Colonic mucosa (tissue), 4 donors: ENCODE measurements at regions of chr17 and their contacts with region 1.

Region 1: GRCh38 chr17:19648475-19649406 is at the start of gene ALDH3A2:
- DNase-seq: peak; percentile 99
- H3K4me3 ChIP-seq: peak within 1 kb of the TSS; percentile 72
- H3K27ac ChIP-seq: peak within 1 kb of the TSS; percentile 87
- H3K4me1 ChIP-seq: peaks cover 13% of the 10 kb centered on the region
- H3K27me3 ChIP-seq: no peaks in the 10 kb centered on the region
- CTCF ChIP-seq: no peak
- total RNA-seq, gene ALDH3A2: 115 to 144 TPM

Region 2: DNA sequence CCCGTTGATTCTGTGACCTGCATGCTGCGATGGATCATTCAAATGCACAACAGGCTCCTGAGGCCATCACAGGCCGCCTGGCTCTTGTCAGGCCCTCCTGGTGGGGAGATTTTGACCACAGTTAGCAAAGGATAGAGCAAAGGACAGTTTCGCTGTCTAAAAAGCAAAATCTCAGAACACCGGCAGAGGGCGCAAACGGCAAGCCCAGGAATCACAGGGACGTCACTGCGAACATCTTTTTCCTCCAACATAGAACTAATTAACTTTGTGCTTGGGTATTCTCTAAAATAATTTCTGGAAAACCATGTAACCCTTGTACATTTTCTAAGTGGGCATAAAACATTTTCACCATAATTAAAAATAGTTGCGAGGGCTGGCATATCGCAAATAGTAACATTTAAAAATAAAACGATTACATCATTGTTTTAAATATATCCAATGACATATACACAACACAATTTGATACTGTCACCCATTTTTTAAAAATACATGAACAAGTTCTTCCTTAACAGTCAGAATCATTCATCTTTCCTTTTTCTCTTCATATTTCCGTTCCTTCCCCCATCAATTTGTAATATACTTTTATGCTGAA is 134.7 kb before region 1 on chr17:
- intact Hi-C with region 1: loop called (anchors 5 kb)
- DNase-seq: peak; percentile 73
- H3K4me3 ChIP-seq: no peak overlapping the region
- H3K27ac ChIP-seq: no peak overlapping the region
- H3K4me1 ChIP-seq: no peaks in the 10 kb centered on the region
- H3K27me3 ChIP-seq: no peaks in the 10 kb centered on the region
- CTCF ChIP-seq: peak; percentile 76

Region 3: GRCh38 chr17:19567216-19568015 is 81.3 kb before region 1 on chr17:
- intact Hi-C with region 1: no loop called
- DNase-seq: no peak
- H3K4me3 ChIP-seq: no peak overlapping the region
- H3K27ac ChIP-seq: no peak overlapping the region
- H3K4me1 ChIP-seq: peaks cover 7% of the 10 kb centered on the region
- H3K27me3 ChIP-seq: no peaks in the 10 kb centered on the region
- CTCF ChIP-seq: no peak

Region 4: DNA sequence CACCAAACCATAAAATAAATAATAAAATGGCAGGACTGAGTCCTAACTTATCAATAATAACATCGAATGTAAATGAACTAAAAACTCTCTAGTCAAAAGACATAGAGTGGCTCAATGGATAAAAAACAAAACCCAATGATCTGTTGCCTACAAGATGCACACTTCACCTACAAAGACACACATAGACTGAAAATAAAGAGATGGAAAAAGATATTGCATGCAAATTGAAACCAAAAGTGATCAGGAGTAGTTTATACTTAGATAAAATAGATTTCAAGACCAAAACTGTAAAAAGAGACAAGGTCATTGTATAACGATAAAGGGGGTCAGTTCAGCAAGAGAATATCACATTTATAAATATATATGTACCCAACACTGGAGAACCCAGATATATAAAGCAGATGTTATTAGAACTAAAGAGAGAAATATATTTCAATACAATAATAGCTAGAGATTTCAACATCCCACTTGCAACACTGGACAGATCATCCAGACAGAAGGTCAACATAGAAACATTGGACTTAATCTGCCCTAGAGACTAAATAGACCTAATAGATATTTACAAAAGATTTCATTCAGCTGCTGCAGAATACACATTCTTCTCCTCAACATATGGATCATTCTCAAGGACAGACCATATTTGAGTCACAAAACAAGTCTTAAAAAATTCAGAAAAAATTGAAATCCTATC is 37.8 kb after region 1 on chr17:
- intact Hi-C with region 1: no loop called
- DNase-seq: no peak
- H3K4me3 ChIP-seq: no peak overlapping the region
- H3K27ac ChIP-seq: no peak overlapping the region
- H3K4me1 ChIP-seq: no peaks in the 10 kb centered on the region
- H3K27me3 ChIP-seq: no peaks in the 10 kb centered on the region
- CTCF ChIP-seq: no peak

Region 5: GRCh38 chr17:19753049-19753444 is 104.3 kb after region 1 on chr17:
- intact Hi-C with region 1: loop called (anchors 10 kb)
- DNase-seq: peak; percentile 57
- H3K4me3 ChIP-seq: no peak overlapping the region
- H3K27ac ChIP-seq: peak overlapping the region; percentile 4
- H3K4me1 ChIP-seq: no peaks in the 10 kb centered on the region
- H3K27me3 ChIP-seq: no peaks in the 10 kb centered on the region
- CTCF ChIP-seq: no peak

Region 6: DNA sequence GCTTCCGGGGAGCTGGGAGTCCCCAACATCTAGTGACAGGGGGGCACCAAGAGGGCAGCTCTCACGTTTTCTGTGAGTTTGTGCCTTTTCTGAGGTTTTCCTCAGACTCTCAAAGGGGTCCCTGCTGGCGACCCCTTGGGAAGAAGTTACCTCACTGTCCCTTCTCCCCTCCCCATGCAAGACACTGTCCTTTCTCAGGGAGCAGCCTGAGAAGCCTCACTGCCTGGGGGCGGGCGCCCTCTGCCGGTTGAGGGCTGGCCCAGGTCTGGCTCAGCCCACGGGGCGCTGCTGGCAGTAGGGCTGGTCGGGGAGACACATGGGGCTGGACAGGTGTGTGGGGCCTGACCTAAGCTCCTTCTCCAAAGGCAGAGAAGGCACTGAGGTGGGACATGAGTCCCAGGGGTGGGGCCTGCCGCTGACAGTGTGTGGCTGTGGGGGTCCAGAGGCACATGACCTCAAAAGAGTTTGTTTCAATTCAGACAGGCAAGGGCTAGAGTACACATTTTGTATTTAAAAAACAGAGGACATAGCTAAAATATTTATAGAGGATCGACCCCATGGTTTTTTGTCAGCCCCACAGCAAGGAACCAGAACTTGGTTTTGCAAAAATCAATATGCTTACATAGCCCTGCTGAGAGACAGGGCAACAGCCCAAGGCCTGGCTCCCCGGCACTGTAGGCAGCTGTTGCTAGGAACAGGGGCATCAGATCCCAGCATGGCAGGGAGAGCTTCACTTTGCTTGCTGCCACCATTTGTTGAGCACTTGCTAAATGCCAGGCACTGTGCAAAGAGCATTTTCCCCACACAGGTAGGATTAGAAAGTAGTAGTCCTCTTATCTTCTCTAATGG is 117.9 kb after region 1 on chr17:
- intact Hi-C with region 1: no loop called
- DNase-seq: peak; percentile 85
- H3K4me3 ChIP-seq: no peak overlapping the region
- H3K27ac ChIP-seq: no peak overlapping the region
- H3K4me1 ChIP-seq: no peaks in the 10 kb centered on the region
- H3K27me3 ChIP-seq: no peaks in the 10 kb centered on the region
- CTCF ChIP-seq: peak; percentile 92